ENCODE measurements at regions of chr2 and their contacts with region 1.

Region 1: GRCh38 chr2:200483729-200484198 is 26.1 kb downstream of the KCTD18 start:
- DNase-seq: no peak
- ATAC-seq: peak; percentile 86
- H3K4me3 ChIP-seq: no peak overlapping the region
- H3K27ac ChIP-seq: no peak overlapping the region
- H3K4me1 ChIP-seq: no peaks in the 10 kb centered on the region
- H3K27me3 ChIP-seq: no peaks in the 10 kb centered on the region
- CTCF ChIP-seq: peak; percentile 69 to 80 (median 78)
- EP300 ChIP-seq: no peak
- POLR2A ChIP-seq: no peak
- RAD21 ChIP-seq: peak; percentile 65

Region 2: GRCh38 chr2:199973703-199974102 is 510.1 kb before region 1 on chr2:
- CTCF ChIA-PET with region 1: interaction called, 104 read pairs
- POLR2A ChIA-PET with region 1: no interaction called
- RAD21 ChIA-PET with region 1: interaction called, 68 read pairs
- SMC1A ChIA-PET with region 1: interaction called, 53 read pairs
- in situ Hi-C with region 1: no loop called
- intact Hi-C with region 1: no loop called
- DNase-seq: no peak
- ATAC-seq: no peak
- H3K4me3 ChIP-seq: no peak overlapping the region
- H3K27ac ChIP-seq: no peak overlapping the region
- H3K4me1 ChIP-seq: 0 out of 2 replicates have a peak, but pooled peaks cover 3% of the 10 kb centered on the region
- H3K27me3 ChIP-seq: no peaks in the 10 kb centered on the region
- CTCF ChIP-seq: peak; percentile 18 to 38 (median 37); a peak in 4 of 6 replicates
- EP300 ChIP-seq: no peak
- POLR2A ChIP-seq: no peak
- RAD21 ChIP-seq: peak; percentile 63

Region 3: DNA sequence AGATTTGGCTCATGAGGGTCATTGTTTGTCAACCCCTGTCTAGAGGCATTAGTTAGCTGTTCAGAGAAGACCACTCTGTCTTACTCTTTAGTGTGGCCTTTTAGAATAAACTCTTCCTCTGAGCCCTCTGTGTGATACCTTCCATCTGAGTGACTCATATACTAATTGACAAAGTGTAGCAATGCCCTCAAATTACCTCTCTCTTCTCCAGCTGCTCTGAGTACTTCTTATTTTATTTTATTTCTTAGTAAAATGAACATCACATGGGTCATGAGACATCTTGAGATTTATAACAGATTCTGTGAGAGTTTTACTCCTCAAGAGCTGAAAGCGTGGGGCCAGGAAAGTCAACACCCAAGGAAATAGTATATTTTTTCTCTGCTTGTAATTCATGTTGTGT is 41.3 kb before region 1 on chr2:
- CTCF ChIA-PET with region 1: interaction called, 68 read pairs
- POLR2A ChIA-PET with region 1: no interaction called
- RAD21 ChIA-PET with region 1: interaction called, 4 read pairs
- SMC1A ChIA-PET with region 1: interaction called, 28 read pairs
- in situ Hi-C with region 1: no loop called
- intact Hi-C with region 1: no loop called
- DNase-seq: no peak
- ATAC-seq: no peak
- H3K4me3 ChIP-seq: no peak overlapping the region
- H3K27ac ChIP-seq: no peak overlapping the region
- H3K4me1 ChIP-seq: no peaks in the 10 kb centered on the region
- H3K27me3 ChIP-seq: no peaks in the 10 kb centered on the region
- CTCF ChIP-seq: no peak
- EP300 ChIP-seq: no peak
- POLR2A ChIP-seq: no peak
- RAD21 ChIP-seq: no peak

Region 4: DNA sequence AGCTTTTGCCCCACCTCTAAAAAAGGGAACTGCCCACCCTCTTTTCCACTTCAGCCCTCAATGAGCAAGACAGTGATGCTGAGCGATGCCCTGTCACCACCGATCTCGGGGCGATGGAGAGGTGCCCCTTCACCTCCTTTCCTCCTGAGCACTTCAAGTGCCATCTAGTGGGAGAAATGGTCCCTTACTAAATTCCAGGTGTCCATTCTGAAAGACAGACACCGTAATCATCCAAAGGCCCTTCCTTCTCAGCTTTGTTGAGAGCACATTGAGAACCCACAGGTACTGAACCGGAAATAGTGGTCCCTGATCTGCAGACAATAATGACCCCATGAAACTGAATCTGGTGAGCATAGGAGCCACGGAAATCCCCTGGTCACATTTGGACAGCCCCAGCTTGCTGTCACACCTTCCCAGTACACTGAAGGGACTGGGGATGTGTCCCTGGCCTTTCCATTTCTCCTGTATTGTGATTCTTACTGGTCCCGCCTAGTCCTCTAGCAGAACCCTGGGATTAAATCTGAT is 12.4 kb before region 1 on chr2:
- CTCF ChIA-PET with region 1: interaction called, 147 read pairs
- POLR2A ChIA-PET with region 1: interaction called, 9 read pairs
- RAD21 ChIA-PET with region 1: interaction called, 91 read pairs
- SMC1A ChIA-PET with region 1: interaction called, 74 read pairs
- in situ Hi-C with region 1: no loop called
- intact Hi-C with region 1: no loop called
- DNase-seq: peak; percentile 93
- ATAC-seq: peak; percentile 88
- H3K4me3 ChIP-seq: no peak overlapping the region
- H3K27ac ChIP-seq: peak overlapping the region; percentile 61
- H3K4me1 ChIP-seq: peaks cover 30% of the 10 kb centered on the region
- H3K27me3 ChIP-seq: no peaks in the 10 kb centered on the region
- CTCF ChIP-seq: peak; percentile 61 to 76 (median 74); a peak in 5 of 6 replicates
- EP300 ChIP-seq: peak; percentile 89 to 90
- POLR2A ChIP-seq: no peak
- RAD21 ChIP-seq: peak; percentile 89

Region 5: DNA sequence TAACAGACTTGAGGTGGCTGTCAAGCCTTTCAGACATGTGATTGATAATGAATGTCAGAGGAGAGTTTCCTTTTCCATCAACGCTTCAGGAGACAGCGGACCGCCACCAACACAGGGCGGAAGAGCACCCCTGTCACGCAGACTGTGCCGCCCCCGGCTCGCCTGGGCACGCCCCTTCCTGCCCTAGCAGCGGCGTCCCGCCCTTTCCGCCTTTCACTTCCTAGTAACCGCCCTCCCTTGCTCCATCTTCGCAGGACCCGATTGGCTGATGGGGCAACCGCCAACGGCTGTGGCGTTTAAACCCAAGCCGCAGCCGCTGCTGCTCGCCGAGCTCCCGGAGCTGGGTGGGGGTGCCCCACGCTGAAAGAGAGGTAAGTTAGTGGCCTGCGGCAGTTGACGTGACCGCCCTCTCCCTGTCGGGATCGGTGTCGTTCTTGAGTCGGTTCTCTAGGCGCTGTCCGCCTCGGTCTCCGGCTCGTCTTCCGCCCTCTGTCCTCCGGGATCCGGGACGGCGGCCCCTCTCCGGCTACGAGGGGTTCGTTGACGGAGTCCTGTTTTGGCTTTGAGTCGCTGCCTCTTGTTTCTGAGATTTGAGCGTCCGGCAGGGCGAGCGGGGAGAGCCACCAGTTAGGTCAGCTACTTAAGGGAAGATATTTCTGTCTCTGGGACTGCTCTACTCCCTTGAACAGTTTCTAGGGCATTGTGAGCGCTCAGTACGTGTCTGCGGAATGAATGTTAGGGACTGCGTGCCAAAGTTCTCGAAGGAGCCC is 42.3 kb after region 1 on chr2 and contains the start of gene SGO2:
- CTCF ChIA-PET with region 1: interaction called, 21 read pairs
- POLR2A ChIA-PET with region 1: no interaction called
- RAD21 ChIA-PET with region 1: interaction called, 10 read pairs
- SMC1A ChIA-PET with region 1: interaction called, 4 read pairs
- in situ Hi-C with region 1: no loop called
- intact Hi-C with region 1: no loop called
- DNase-seq: peak; percentile 85
- ATAC-seq: peak; percentile 100
- H3K4me3 ChIP-seq: peak within 1 kb of the TSS; percentile 87
- H3K27ac ChIP-seq: peak within 1 kb of the TSS; percentile 82
- H3K4me1 ChIP-seq: peaks cover 3% of the 10 kb centered on the region; the same call in 1 of the 2 replicates
- H3K27me3 ChIP-seq: no peaks in the 10 kb centered on the region; a peak in 1 of 4 replicates
- CTCF ChIP-seq: no peak
- EP300 ChIP-seq: no peak
- POLR2A ChIP-seq: peak; percentile 86
- RAD21 ChIP-seq: no peak
- polyA plus RNA-seq, gene SGO2: 15.8 to 30.7 TPM

Region 6: DNA sequence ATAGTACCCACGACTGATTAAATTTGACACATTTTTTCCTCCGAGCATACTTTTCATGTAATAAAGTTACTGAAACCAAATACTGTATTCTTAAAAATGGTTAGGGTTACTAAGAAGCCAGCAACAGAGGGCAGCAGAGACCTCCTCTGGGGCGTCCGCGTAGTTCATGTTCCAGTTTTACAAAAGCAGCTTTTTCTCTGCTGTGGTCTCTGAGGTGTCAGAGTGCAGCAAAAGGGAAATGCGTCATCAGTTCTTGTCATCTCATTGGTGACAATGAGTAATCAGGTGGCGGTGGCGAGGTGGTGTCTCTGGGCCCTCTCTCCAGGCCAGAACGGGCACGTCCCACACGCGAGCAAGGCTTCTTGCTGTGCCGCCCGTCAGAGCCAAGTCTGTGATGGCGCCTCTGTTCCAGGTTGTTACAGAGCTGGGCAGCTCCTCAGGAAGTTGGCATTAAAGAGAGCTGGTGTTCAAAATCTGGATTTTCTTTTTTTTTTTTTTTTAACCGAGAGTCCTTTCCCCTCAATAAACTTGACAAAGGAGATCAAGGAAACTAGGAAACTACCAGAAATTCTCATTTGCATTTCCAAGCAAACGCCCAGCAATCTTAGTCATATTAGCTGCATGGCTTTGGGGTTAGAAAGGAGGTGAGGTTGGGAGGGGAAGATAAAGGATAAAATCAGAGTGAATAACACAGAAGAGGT is 229.4 kb after region 1 on chr2:
- CTCF ChIA-PET with region 1: interaction called, 30 read pairs
- POLR2A ChIA-PET with region 1: interaction called, 7 read pairs
- RAD21 ChIA-PET with region 1: interaction called, 15 read pairs
- SMC1A ChIA-PET with region 1: interaction called, 10 read pairs
- in situ Hi-C with region 1: loop called (anchors 10 kb)
- intact Hi-C with region 1: no loop called
- DNase-seq: peak; percentile 98
- ATAC-seq: peak; percentile 99
- H3K4me3 ChIP-seq: no peak overlapping the region
- H3K27ac ChIP-seq: peak overlapping the region; percentile 82
- H3K4me1 ChIP-seq: peaks cover 7% of the 10 kb centered on the region
- H3K27me3 ChIP-seq: no peaks in the 10 kb centered on the region
- CTCF ChIP-seq: peak; percentile 75 to 94 (median 80)
- EP300 ChIP-seq: peak; percentile 85 to 94; a peak in 3 of 4 replicates
- POLR2A ChIP-seq: peak; percentile 98
- RAD21 ChIP-seq: peak; percentile 95